ENCODE measurements at regions of chr17 and their contacts with region 1.

Region 1: GRCh38 chr17:77957857-77958715 is at the start of gene TNRC6C:
- DNase-seq: peak; percentile 100
- ATAC-seq: peak; percentile 94
- H3K4me3 Mint-ChIP-seq: peak within 1 kb of the TSS; percentile 92
- H3K27ac Mint-ChIP-seq: peak within 1 kb of the TSS; percentile 78
- H3K4me1 Mint-ChIP-seq: peaks cover 55% of the 10 kb centered on the region
- H3K27me3 Mint-ChIP-seq: peaks cover 34% of the 10 kb centered on the region
- CTCF ChIP-seq: no peak
- total RNA-seq, gene TNRC6C: 39.9 to 52.3 TPM (median 41.8 TPM) in 3 replicates

Region 2: DNA sequence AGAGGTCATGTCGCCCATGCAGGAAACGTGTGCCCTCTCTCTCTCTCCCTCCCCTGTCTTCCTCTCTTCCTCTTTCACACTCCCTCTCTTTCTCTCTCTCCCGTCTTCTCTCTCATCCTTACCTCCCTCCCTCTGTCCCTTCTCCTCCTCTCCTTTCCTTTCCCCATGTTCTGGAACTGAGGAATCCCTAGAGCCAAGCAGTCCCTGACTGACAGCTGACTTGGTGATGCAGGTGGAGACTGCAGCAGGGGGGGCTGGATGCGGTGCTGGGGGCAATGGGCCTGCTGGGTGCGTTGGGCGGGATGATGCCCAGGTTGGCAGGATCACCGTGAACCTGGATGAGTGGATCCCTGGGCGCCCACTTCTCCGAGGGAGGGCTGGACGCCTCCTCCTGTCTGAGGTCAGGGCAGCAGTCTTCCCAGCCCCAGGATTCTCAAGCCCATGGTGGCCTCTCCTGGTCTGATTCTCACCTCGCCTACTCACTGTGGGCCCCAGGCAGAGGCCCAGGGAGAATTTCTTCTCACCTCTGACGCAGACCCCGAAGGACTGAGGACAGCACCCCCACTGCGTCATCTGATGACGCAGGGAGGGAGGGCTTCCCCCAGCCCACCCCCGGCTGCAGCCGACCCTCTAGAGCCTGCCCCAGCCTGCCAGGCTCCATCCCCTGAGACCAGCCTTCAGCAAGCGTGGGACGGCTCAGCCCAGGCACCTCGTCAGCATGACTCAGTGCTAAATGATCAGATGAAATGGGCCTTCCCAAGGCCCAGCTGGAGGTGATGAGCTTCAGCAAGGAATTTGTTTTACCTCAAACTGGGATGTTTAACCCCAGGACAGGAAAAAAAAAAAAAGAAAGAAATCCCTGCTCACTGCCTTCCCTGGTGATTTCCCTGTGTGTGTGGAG is 187.6 kb before region 1 on chr17:
- CTCF ChIA-PET with region 1: interaction called, 4 read pairs
- POLR2A ChIA-PET with region 1: interaction called, 11 read pairs
- DNase-seq: no peak
- ATAC-seq: no peak
- H3K4me3 Mint-ChIP-seq: no peak overlapping the region
- H3K27ac Mint-ChIP-seq: no peak overlapping the region
- H3K4me1 Mint-ChIP-seq: peaks cover 35% of the 10 kb centered on the region
- H3K27me3 Mint-ChIP-seq: peaks cover 19% of the 10 kb centered on the region
- CTCF ChIP-seq: no peak

Region 3: DNA sequence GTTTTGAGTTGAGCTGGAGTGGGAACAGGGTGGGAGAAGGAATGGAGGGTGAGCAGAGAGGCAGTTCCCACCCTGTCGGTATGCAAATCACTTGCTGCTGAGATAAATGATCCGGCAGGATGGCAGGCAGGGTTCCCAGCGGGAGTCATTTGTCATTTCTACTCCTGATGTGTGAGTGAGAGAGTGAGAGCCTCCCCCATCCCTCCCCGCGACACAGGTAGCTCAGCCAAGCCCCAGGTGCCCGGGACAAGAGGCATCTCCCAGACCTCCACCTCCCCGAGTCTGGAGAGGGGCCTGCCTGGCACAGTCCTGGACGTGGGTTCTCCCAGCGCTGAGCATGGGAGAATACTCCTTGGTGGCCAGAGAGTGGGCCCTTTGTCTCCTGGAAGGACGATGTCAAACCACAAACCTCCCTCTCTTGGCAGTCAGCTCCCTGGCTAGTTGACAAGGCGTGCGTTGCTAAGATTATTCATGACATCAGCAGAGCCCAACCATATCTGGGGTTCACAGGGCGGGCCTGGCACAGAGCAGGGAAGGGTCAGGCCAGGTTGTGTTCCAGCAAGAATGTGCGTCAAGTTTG is 33.2 kb before region 1 on chr17:
- CTCF ChIA-PET with region 1: interaction called, 6 read pairs
- POLR2A ChIA-PET with region 1: interaction called, 14 read pairs
- DNase-seq: peak; percentile 68
- ATAC-seq: peak; percentile 81
- H3K4me3 Mint-ChIP-seq: peak overlapping the region; percentile 51
- H3K27ac Mint-ChIP-seq: peak overlapping the region; percentile 77; the same call in 1 of the 2 replicates
- H3K4me1 Mint-ChIP-seq: peaks cover 71% of the 10 kb centered on the region
- H3K27me3 Mint-ChIP-seq: peaks cover 13% of the 10 kb centered on the region
- CTCF ChIP-seq: no peak

Region 4: GRCh38 chr17:77935121-77935571 is 22.9 kb before region 1 on chr17:
- CTCF ChIA-PET with region 1: interaction called, 8 read pairs
- POLR2A ChIA-PET with region 1: interaction called, 12 read pairs
- DNase-seq: no peak
- ATAC-seq: 0 out of 2 replicates have a peak, but pooled peaks have one; percentile 17
- H3K4me3 Mint-ChIP-seq: peak overlapping the region; percentile 35
- H3K27ac Mint-ChIP-seq: peak overlapping the region; percentile 93
- H3K4me1 Mint-ChIP-seq: peaks cover 53% of the 10 kb centered on the region
- H3K27me3 Mint-ChIP-seq: peaks cover 3% of the 10 kb centered on the region; the same call in 1 of the 2 replicates
- CTCF ChIP-seq: no peak

Region 5: DNA sequence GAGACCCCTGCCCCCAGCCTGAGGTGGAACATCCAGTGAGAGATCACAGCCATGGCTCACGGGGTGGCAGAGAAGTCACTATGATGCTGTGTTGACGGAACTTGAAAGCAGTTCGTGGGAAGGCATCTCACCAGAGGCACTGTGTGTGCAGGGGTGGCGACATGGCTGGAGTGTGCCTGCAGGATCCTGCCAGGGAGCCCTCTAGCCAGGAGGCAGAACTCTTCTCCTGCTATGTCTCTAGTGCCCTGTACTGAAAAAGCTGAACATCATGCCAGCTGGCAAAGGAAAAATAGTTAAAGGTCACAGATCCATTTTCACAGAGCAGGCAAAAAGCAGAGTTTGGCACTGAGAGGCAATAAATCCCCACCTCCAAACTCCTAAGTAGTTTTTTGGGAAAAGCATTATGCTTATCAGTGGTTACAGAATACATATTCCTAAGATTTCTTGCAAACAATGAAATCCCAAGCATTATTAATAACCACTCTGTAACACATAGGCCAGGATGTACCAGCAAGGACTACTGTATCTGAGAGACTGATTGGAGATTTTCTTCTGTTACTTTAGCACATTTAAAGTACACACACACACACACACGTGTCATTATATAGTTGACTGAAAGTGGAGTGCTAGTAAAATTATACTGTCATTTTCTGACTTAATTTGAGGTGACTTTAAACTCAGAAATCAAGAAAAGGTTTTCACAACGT is 37.2 kb after region 1 on chr17:
- CTCF ChIA-PET with region 1: no interaction called
- POLR2A ChIA-PET with region 1: interaction called, 11 read pairs
- DNase-seq: no peak
- ATAC-seq: no peak; the same call in 1 of the 2 replicates
- H3K4me3 Mint-ChIP-seq: no peak overlapping the region
- H3K27ac Mint-ChIP-seq: peak overlapping the region; percentile 55; the same call in 1 of the 2 replicates
- H3K4me1 Mint-ChIP-seq: peaks cover 50% of the 10 kb centered on the region
- H3K27me3 Mint-ChIP-seq: no peaks in the 10 kb centered on the region
- CTCF ChIP-seq: no peak

Region 6: GRCh38 chr17:78013683-78014467 is 55.8 kb after region 1 on chr17:
- CTCF ChIA-PET with region 1: interaction called, 10 read pairs
- POLR2A ChIA-PET with region 1: interaction called, 7 read pairs
- DNase-seq: peak; percentile 44
- ATAC-seq: peak; percentile 63
- H3K4me3 Mint-ChIP-seq: no peak overlapping the region
- H3K27ac Mint-ChIP-seq: peak overlapping the region; percentile 50
- H3K4me1 Mint-ChIP-seq: peaks cover 4% of the 10 kb centered on the region
- H3K27me3 Mint-ChIP-seq: no peaks in the 10 kb centered on the region
- CTCF ChIP-seq: peak; percentile 49; the same call in 1 of the 2 replicates